Mammary epithelial cell (primary cell): ENCODE measurements at regions of chr12 and their contacts with region 1.

Region 1: GRCh38 chr12:105613887-105614286 is 283.4 kb downstream of the C12orf75 start:
- DNase-seq: no peak
- H3K4me3 ChIP-seq: no peak overlapping the region
- H3K27ac ChIP-seq: no peak overlapping the region
- H3K4me1 ChIP-seq: peaks cover 5% of the 10 kb centered on the region
- H3K27me3 ChIP-seq: no peaks in the 10 kb centered on the region
- CTCF ChIP-seq: no peak

Region 2: GRCh38 chr12:105575235-105575634 is 38.7 kb before region 1 on chr12:
- CTCF ChIA-PET with region 1: no interaction called
- dilution Hi-C with region 1: loop called (anchors 5 kb)
- in situ Hi-C with region 1: no loop called
- intact Hi-C with region 1: no loop called
- DNase-seq: no peak
- H3K4me3 ChIP-seq: no peak overlapping the region
- H3K27ac ChIP-seq: no peak overlapping the region
- H3K4me1 ChIP-seq: peaks cover 7% of the 10 kb centered on the region
- H3K27me3 ChIP-seq: no peaks in the 10 kb centered on the region
- CTCF ChIP-seq: no peak